IMR-90 (cell line): ENCODE measurements at regions of chr9 and their contacts with region 1.

Region 1: GRCh38 chr9:137227063-137227852 is at the start of gene RNF224:
- DNase-seq: peak; percentile 65
- ATAC-seq: peak; percentile 56
- H3K4me3 ChIP-seq: no peak within 1 kb of the TSS
- H3K27ac ChIP-seq: no peak within 1 kb of the TSS
- H3K4me1 ChIP-seq: peaks cover 12% of the 10 kb centered on the region
- H3K27me3 ChIP-seq: peaks cover 1% of the 10 kb centered on the region; the same call in 1 of the 2 replicates
- CTCF ChIP-seq: peak; percentile 92
- POLR2A ChIP-seq: peak; percentile 37; the same call in 1 of the 2 replicates
- RAD21 ChIP-seq: peak; percentile 89
- total RNA-seq, gene RNF224: not detected in 2 replicates

Region 2: DNA sequence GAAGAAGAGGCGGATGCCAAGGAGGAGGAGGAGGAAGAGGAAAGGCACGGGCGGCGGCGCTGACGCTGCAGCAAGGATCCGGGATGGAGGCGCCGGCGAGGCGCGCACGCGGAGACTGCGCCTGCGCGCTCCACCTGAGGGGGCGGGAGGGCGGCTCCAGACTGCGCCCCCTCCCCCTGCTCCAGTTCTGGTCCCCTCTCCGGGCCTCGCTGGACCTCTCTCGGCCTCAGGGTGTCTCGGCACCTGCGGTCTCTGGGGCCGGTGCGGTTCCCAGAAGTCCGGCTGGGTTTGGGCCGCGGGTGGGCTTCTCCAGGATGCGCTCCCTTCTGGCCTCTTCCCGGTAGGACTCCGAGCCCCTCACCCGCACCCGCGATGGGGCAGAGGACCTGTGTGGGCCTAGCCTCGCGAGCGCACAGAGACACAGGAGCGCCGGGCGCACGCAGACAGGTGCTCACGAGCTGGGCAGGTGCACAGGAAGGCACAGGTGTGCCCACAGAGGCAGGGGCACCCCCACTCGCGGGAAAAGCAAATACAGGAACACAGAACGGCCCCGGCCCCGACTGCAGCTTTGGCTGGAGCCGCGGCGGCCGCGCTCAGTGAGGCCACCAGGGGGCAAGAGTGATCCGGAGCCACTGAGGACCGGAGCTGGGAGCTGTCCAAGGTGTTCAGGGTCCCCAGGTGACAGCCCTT is 181.0 kb before region 1 on chr9 and contains the start of gene NPDC1:
- CTCF ChIA-PET with region 1: interaction called, 4 read pairs
- POLR2A ChIA-PET with region 1: no interaction called
- dilution Hi-C with region 1: no loop called
- in situ Hi-C with region 1: no loop called
- intact Hi-C with region 1: loop called (anchors 2 kb)
- DNase-seq: peak; percentile 61
- ATAC-seq: peak; percentile 76
- H3K4me3 ChIP-seq: peak within 1 kb of the TSS; percentile 63
- H3K27ac ChIP-seq: no peak within 1 kb of the TSS; the same call in 1 of the 2 replicates
- H3K4me1 ChIP-seq: peaks cover 11% of the 10 kb centered on the region
- H3K27me3 ChIP-seq: peaks cover 32% of the 10 kb centered on the region
- CTCF ChIP-seq: peak; percentile 89
- POLR2A ChIP-seq: no peak
- RAD21 ChIP-seq: peak; percentile 74
- total RNA-seq, gene NPDC1: 2.7 and 2.8 TPM in 2 replicates

Region 3: GRCh38 chr9:137114610-137115391 is 112.5 kb before region 1 on chr9 and contains the start of gene DPP7:
- CTCF ChIA-PET with region 1: no interaction called
- POLR2A ChIA-PET with region 1: interaction called, 12 read pairs
- dilution Hi-C with region 1: no loop called
- in situ Hi-C with region 1: no loop called
- intact Hi-C with region 1: loop called (anchors 1 kb)
- DNase-seq: peak; percentile 16
- ATAC-seq: peak; percentile 91
- H3K4me3 ChIP-seq: peak within 1 kb of the TSS; percentile 49
- H3K27ac ChIP-seq: peak within 1 kb of the TSS; percentile 18; the same call in 1 of the 2 replicates
- H3K4me1 ChIP-seq: peaks cover 6% of the 10 kb centered on the region
- H3K27me3 ChIP-seq: no peaks in the 10 kb centered on the region
- CTCF ChIP-seq: no peak
- POLR2A ChIP-seq: no peak
- RAD21 ChIP-seq: no peak
- total RNA-seq, gene DPP7: 14.2 and 14.9 TPM in 2 replicates

Region 4: DNA sequence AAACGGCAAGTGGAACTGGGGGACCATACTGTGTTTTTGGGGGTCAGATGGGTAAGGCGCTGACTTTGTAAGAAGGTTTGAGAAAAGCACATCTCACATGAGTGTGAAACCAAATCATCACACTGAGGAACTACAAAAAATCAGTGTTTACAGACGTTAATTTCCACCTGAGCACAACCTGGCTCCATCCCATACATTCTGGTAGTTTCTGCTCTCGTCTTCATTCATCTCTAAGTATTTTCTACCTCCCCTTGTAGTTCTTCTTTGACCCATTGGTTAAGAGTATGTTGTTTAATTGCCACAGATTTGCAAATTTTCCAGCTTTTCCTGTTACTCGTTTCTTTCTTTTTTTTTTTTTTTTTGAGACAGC is 103.8 kb before region 1 on chr9:
- CTCF ChIA-PET with region 1: no interaction called
- POLR2A ChIA-PET with region 1: no interaction called
- dilution Hi-C with region 1: no loop called
- in situ Hi-C with region 1: loop called (anchors 5 kb)
- intact Hi-C with region 1: loop called (anchors 1 kb)
- DNase-seq: no peak
- ATAC-seq: no peak
- H3K4me3 ChIP-seq: no peak overlapping the region
- H3K27ac ChIP-seq: no peak overlapping the region
- H3K4me1 ChIP-seq: peaks cover 9% of the 10 kb centered on the region; the same call in 1 of the 2 replicates
- H3K27me3 ChIP-seq: no peaks in the 10 kb centered on the region
- CTCF ChIP-seq: no peak
- POLR2A ChIP-seq: no peak
- RAD21 ChIP-seq: no peak

Region 5: DNA sequence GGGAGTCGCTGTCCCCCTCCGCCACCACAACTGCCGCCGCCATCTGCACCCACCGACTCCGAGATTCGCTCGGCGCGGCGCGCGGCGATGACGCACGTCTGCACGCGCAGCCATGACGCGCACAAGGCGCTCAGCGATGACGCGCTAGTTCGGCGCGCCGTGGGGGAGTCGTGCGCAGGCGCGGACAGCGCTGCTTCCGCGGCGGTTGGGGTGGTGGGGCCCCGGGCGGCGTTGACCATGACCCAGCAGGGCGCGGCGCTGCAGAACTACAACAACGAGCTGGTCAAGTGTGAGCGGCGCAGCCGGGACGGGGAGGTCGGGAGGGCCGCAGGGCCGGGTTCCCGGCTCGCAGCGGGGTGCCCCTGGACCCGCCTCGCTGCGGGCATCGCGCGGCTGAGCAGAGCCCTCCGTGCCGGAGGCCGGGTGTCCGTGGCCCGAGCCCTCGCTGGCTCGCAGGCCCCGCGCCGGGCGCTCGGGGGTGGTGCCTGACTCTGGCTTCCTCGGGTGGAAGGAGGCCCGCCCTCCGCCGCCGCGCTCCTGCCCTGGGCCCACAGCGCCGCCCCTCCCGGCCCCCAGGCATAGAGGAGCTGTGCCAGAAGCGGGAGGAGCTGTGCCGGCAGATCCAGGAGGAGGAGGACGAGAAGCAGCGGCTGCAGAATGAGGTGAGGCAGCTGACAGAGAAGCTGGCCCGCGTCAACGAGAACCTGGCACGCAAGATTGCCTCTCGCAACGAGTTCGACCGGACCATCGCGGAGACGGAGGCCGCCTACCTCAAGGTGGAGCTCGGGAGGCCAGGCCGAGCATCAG is 38.6 kb before region 1 on chr9 and contains the starts of genes ANAPC2 and SSNA1:
- CTCF ChIA-PET with region 1: no interaction called
- POLR2A ChIA-PET with region 1: no interaction called
- dilution Hi-C with region 1: no loop called
- in situ Hi-C with region 1: no loop called
- intact Hi-C with region 1: no loop called
- DNase-seq: peak; percentile 92
- ATAC-seq: peak; percentile 91
- H3K4me3 ChIP-seq: peak within 1 kb of the TSS; percentile 91
- H3K27ac ChIP-seq: peak within 1 kb of the TSS; percentile 73
- H3K4me1 ChIP-seq: peaks cover 16% of the 10 kb centered on the region
- H3K27me3 ChIP-seq: no peaks in the 10 kb centered on the region
- CTCF ChIP-seq: peak; percentile 50
- POLR2A ChIP-seq: peak; percentile 86
- RAD21 ChIP-seq: peak; percentile 42
- total RNA-seq, gene ANAPC2: 9.3 and 9.4 TPM in 2 replicates
- total RNA-seq, gene SSNA1: 55.7 and 63.9 TPM in 2 replicates

Region 6: DNA sequence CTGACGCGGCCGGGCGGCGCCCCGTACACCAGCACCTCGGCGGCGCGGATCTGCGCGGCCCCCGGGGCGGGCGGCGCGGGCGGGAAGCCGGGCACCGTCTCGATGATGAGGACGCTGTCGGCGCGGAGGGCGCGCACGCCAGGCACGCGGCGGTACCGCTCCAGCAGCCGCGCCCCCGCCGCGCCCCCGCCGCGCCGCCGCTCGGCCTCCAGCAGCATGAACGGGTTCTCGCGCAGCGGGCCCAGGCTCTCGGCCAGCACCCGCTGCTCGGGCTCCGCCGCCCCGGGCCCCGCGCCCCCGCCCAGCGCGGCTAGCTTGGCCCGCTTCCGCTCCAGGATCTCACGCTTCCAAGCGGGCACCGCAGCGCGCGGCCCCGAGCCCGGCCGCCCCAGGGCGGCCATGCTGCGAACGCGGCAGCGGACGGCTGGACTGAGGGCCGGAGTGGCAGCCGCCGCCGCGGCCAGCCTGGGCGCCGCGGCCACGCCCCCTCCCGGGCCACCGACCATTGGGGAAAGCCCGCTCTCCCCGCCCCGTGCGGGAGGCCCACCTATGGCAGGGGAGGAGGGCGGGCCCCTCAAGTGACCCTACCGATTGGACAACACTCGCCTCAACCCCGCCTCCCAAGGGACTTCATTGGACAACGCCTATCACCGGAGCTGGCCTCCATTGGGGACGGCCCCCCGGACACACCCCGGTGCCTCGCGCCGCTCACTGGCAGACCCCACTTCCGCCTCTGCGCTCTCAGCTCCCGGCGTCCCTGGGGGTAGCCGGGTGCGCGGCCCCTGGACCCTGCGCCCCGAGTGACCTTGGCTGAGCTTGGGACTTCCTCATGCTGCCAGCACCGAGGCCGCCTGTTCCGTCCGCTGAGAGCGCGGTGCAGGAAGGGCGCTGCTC is 26.7 kb before region 1 on chr9 and contains the start of gene TPRN:
- CTCF ChIA-PET with region 1: no interaction called
- POLR2A ChIA-PET with region 1: interaction called, 16 read pairs
- dilution Hi-C with region 1: no loop called
- in situ Hi-C with region 1: no loop called
- intact Hi-C with region 1: no loop called
- DNase-seq: peak; percentile 98
- ATAC-seq: peak; percentile 96
- H3K4me3 ChIP-seq: peak within 1 kb of the TSS; percentile 88
- H3K27ac ChIP-seq: peak within 1 kb of the TSS; percentile 91
- H3K4me1 ChIP-seq: peaks cover 21% of the 10 kb centered on the region
- H3K27me3 ChIP-seq: no peaks in the 10 kb centered on the region
- CTCF ChIP-seq: no peak
- POLR2A ChIP-seq: peak; percentile 95
- RAD21 ChIP-seq: no peak
- total RNA-seq, gene TPRN: 1.7 and 1.8 TPM in 2 replicates

Region 7: DNA sequence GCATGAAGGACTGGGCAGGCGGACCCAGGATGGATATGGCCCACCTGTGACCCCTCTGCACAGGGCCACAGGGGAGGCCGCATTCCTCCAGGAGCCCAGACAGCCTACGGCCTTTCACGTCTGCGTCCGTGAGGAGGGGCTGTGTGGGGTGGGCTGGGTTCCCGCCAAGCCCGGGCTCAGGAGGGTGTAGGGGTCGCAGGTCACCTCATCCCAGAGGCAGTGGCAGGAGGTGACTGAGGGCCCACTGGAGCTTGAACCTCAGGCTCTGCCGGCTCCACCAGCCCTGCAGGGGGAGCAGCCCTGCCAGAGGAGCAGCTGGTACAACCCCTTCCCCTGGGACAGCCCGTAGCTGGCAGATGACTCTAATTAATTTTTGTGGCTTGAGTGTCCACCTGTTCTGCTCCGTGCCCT is 609.6 kb after region 1 on chr9:
- CTCF ChIA-PET with region 1: no interaction called
- POLR2A ChIA-PET with region 1: no interaction called
- dilution Hi-C with region 1: no loop called
- in situ Hi-C with region 1: no loop called
- intact Hi-C with region 1: no loop called
- DNase-seq: no peak
- ATAC-seq: no peak
- H3K4me3 ChIP-seq: no peak overlapping the region
- H3K27ac ChIP-seq: no peak overlapping the region
- H3K4me1 ChIP-seq: no peaks in the 10 kb centered on the region
- H3K27me3 ChIP-seq: no peaks in the 10 kb centered on the region
- CTCF ChIP-seq: no peak
- POLR2A ChIP-seq: no peak
- RAD21 ChIP-seq: no peak